GM12878 (cell line): ENCODE measurements at regions of chr5 and their contacts with region 1.

Region 1: GRCh38 chr5:170225326-170226128 is 7.3 kb upstream of the C5orf58 start:
- DNase-seq: peak; percentile 4
- ATAC-seq: peak; percentile 93
- H3K4me3 ChIP-seq: no peak overlapping the region
- H3K27ac ChIP-seq: no peak overlapping the region
- H3K4me1 ChIP-seq: no peaks in the 10 kb centered on the region
- H3K27me3 ChIP-seq: no peaks in the 10 kb centered on the region; a peak in 1 of 4 replicates
- CTCF ChIP-seq: peak; percentile 72 to 91 (median 76)
- EP300 ChIP-seq: no peak
- POLR2A ChIP-seq: no peak
- RAD21 ChIP-seq: peak; percentile 98

Region 2: GRCh38 chr5:170252720-170253350 is 27.3 kb after region 1 on chr5:
- CTCF ChIA-PET with region 1: interaction called, 11 read pairs
- POLR2A ChIA-PET with region 1: no interaction called
- RAD21 ChIA-PET with region 1: no interaction called
- SMC1A ChIA-PET with region 1: no interaction called
- in situ Hi-C with region 1: no loop called
- intact Hi-C with region 1: no loop called
- DNase-seq: no peak
- ATAC-seq: no peak
- H3K4me3 ChIP-seq: no peak overlapping the region
- H3K27ac ChIP-seq: no peak overlapping the region
- H3K4me1 ChIP-seq: no peaks in the 10 kb centered on the region
- H3K27me3 ChIP-seq: no peaks in the 10 kb centered on the region
- CTCF ChIP-seq: no peak
- EP300 ChIP-seq: no peak
- POLR2A ChIP-seq: no peak
- RAD21 ChIP-seq: no peak

Region 3: GRCh38 chr5:170293273-170293672 is 67.7 kb after region 1 on chr5:
- CTCF ChIA-PET with region 1: interaction called, 5 read pairs
- POLR2A ChIA-PET with region 1: no interaction called
- RAD21 ChIA-PET with region 1: interaction called, 10 read pairs
- SMC1A ChIA-PET with region 1: interaction called, 3 read pairs
- in situ Hi-C with region 1: no loop called
- intact Hi-C with region 1: no loop called
- DNase-seq: peak; percentile 87
- ATAC-seq: peak; percentile 86
- H3K4me3 ChIP-seq: peak overlapping the region; percentile 77
- H3K27ac ChIP-seq: no peak overlapping the region
- H3K4me1 ChIP-seq: peaks cover 15% of the 10 kb centered on the region
- H3K27me3 ChIP-seq: no peaks in the 10 kb centered on the region
- CTCF ChIP-seq: peak in 1 of 3 experiments; percentile 19; a peak in 1 of 6 replicates
- EP300 ChIP-seq: peak in 1 of 2 experiments; percentile 80; a peak in 2 of 4 replicates
- POLR2A ChIP-seq: no peak
- RAD21 ChIP-seq: peak; percentile 34; the same call in 1 of the 2 replicates

Region 4: GRCh38 chr5:170348137-170348633 is 122.7 kb after region 1 on chr5:
- CTCF ChIA-PET with region 1: interaction called, 120 read pairs
- POLR2A ChIA-PET with region 1: no interaction called
- RAD21 ChIA-PET with region 1: interaction called, 18 read pairs
- SMC1A ChIA-PET with region 1: interaction called, 18 read pairs
- in situ Hi-C with region 1: no loop called
- intact Hi-C with region 1: no loop called
- DNase-seq: no peak
- ATAC-seq: peak; percentile 23; the same call in 2 of the 3 replicates
- H3K4me3 ChIP-seq: no peak overlapping the region
- H3K27ac ChIP-seq: no peak overlapping the region
- H3K4me1 ChIP-seq: peaks cover 2% of the 10 kb centered on the region; the same call in 1 of the 2 replicates
- H3K27me3 ChIP-seq: peaks cover 1 to 15% of the 10 kb centered on the region in 2 experiments; a peak in 2 of 4 replicates
- CTCF ChIP-seq: peak in 1 of 3 experiments; percentile 21; a peak in 1 of 6 replicates
- EP300 ChIP-seq: no peak
- POLR2A ChIP-seq: no peak
- RAD21 ChIP-seq: peak; percentile 49

Region 5: GRCh38 chr5:170420780-170421412 is 195.4 kb after region 1 on chr5:
- CTCF ChIA-PET with region 1: interaction called, 180 read pairs
- POLR2A ChIA-PET with region 1: no interaction called
- RAD21 ChIA-PET with region 1: interaction called, 11 read pairs
- SMC1A ChIA-PET with region 1: interaction called, 21 read pairs
- in situ Hi-C with region 1: loop called (anchors 5 kb)
- intact Hi-C with region 1: loop called (anchors 1 kb)
- DNase-seq: no peak
- ATAC-seq: peak; percentile 92
- H3K4me3 ChIP-seq: no peak overlapping the region
- H3K27ac ChIP-seq: no peak overlapping the region
- H3K4me1 ChIP-seq: no peaks in the 10 kb centered on the region
- H3K27me3 ChIP-seq: no peaks in the 10 kb centered on the region; a peak in 1 of 4 replicates
- CTCF ChIP-seq: peak; percentile 65 to 73 (median 68)
- EP300 ChIP-seq: no peak
- POLR2A ChIP-seq: no peak
- RAD21 ChIP-seq: peak; percentile 76

Region 6: DNA sequence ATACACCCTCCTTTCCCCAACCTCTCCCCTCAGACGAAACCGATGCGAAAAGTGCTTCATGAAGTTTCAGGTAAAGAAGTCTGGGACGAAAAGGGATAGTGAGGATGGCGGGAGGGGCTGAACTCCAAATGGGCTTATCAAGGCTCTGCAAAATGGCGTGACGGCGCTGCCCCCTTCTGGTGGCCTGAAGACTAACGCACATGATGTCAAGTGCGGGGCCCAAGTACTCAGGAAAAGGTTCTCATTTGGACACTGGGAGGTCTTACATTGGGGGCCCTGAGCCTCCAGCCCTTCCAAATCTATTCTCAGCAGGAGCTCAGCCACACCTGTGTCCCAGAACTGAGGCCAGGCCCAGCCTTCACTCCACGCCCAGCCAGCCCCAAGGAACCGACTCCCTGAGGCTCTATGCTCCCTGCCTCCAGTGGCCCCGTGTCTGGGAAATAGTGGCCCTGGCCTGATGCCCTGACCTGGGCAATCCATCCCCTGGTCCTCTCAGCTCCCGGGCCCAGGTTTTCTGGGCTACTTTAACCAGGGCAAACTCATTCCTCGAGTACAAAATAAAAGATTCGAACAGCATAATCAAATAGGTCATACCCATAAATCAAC is 398.2 kb after region 1 on chr5:
- CTCF ChIA-PET with region 1: interaction called, 5 read pairs
- POLR2A ChIA-PET with region 1: no interaction called
- RAD21 ChIA-PET with region 1: no interaction called
- SMC1A ChIA-PET with region 1: interaction called, 3 read pairs
- in situ Hi-C with region 1: loop called (anchors 10 kb)
- intact Hi-C with region 1: no loop called
- DNase-seq: no peak
- ATAC-seq: peak; percentile 85
- H3K4me3 ChIP-seq: no peak overlapping the region
- H3K27ac ChIP-seq: no peak overlapping the region
- H3K4me1 ChIP-seq: no peaks in the 10 kb centered on the region
- H3K27me3 ChIP-seq: no peaks in the 10 kb centered on the region; a peak in 2 of 4 replicates
- CTCF ChIP-seq: peak; percentile 49 to 51 (median 50)
- EP300 ChIP-seq: no peak
- POLR2A ChIP-seq: no peak
- RAD21 ChIP-seq: peak; percentile 59